Left colon (tissue), 2 donors: ENCODE measurements at regions of chr21 and their contacts with region 1.

Region 1: GRCh38 chr21:39137248-39138178 is 45.7 kb downstream of the PSMG1 start:
- DNase-seq: no peak
- ATAC-seq: no peak

Region 2: GRCh38 chr21:38505654-38506515 is 631.6 kb before region 1 on chr21:
- intact Hi-C with region 1: loop called in 1 of 2 experiments (anchors 5 kb)
- DNase-seq: peak in 1 of 2 donors; percentile 23
- ATAC-seq: peak; percentile 85

Region 3: GRCh38 chr21:38733973-38734546 is 403.5 kb before region 1 on chr21:
- intact Hi-C with region 1: loop called in 1 of 2 experiments (anchors 10 kb)
- DNase-seq: peak; percentile 79 to 95
- ATAC-seq: peak; percentile 78